Left ventricle myocardium superior (tissue), 1 donor: ENCODE measurements at regions of chr1 and their contacts with region 1.

Region 1: DNA sequence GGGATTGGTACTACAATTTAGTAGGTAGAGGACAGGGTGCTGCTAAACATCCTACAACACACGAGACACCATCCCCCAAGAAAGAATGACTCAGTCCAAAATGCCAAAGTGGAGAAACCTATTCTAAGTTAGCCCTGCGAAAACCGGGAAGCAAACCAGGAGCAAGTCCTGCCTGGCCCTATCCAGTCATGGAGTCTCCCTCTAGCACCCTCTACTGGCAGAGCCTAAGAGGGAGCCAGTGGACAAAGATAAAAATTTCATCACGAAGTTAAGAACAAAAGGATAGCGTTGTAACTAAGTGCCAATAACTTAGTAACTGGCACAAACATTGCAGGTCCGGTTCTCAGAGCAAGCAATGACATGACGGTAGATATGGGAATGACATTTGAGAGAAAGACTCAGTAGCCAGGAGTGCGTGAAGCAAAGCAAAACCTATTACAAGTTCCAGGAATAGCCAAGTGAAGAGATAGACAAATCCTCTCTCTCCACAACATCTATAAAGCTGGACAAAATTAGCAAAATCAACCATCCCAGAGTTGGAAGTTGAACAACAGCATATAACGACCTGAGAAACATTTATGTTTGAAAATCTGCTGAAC is 383.5 kb downstream of the OMA1 start:
- DNase-seq: peak; percentile 34
- ATAC-seq: peak; percentile 93

Region 2: DNA sequence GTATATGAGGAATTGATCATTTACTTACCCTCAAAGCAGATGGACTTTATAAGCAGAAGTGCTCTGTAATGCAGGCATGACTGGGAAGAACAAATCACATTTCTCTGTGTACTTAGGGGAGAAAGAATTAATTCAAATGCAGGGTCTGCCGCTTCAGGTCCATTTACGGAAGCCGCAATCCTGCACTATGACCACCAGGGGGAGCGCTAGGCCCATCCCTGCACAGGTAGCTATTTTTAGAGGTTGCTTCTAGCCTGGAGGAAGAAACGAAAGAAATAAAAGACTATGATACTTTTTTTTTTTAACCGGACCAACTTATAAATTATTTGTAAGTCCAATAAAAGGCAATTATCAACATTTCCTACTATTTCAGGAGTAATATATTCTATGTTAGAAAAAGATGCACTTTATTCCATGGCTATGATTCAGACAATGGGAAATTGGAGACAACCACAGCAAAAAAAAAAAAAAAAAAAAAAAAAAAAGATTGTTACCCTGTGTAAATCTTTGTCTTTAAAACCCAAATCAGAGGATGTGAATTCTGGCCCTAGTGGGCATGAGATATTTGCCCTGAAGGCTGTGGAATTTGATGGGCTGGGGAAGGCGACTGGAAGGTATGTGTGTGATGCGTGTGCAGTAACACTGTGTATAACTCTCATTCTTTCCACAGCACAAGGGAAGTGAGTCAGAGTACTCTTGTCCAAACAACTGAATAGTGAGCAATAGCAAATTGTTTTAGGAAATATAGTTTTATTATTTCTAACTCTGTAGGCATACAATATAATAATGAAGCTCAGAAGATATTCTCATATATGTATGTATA is 1331.0 kb before region 1 on chr1:
- intact Hi-C with region 1: loop called (anchors 10 kb)
- DNase-seq: peak; percentile 69
- ATAC-seq: peak; percentile 78

Region 3: DNA sequence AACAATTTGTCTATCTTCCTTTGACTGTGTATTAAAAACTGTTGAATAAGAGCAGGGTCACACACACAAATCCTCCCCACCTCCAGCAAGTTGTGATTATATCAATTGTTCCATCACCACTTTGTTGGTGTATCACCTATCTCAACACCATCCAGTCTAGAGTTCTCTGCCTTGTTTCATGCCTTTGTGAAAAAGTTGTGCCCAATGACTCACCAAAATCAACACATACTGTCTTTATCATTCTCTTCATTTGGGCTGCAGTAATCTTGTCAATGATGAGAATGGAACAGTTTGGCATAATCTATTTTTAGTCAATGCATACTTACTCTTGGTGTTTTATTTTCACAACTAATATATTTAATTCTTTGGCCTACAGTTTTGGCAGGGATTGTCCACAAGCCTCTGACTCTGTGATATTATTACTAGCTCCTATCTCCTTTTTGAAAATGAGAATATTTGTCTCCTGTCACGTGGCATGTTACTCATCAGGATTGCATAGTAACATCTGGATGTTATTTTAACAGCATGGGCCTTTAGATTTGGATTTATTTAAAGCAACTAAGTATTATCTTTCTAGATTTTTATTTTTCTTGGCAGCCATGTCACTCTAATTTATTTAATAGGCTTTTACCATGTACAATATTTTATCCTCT is 1905.5 kb after region 1 on chr1:
- intact Hi-C with region 1: no loop called
- DNase-seq: no peak
- ATAC-seq: no peak